HEK293 (cell line): ENCODE measurements at regions of chr5 and their contacts with region 1.

Region 1: DNA sequence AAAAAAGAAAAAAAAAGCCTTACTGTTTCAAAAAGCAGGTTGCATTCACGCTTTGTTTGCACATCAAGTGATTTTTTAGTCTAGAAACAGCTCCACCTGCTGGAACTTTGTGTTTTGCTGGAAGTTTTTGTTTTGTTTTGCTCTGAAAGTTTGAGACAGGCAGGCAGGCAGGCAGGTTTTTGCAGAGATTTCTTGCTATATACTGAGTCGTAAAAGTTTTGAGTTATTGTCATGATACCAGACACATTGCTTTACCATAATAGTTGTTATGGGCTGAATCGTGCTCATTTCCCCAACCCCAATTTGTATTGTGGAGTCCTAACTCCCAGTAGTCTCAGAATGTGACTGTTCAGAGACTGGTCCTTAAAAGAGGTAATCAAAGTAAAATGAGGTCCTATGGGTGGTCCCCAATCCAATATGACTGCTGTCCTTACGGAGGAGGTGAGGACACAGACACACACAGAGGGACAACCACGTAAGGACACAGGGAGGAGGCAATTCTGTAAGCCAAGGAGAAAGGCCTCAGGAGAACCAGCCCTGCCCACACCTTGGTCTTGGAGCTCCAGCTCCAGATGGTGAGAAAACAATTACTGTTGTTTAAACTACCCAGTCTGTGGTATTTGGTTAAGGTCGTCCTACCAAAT is 20.9 kb downstream of the OR2Y1 start:
- H3K4me3 ChIP-seq: no peak overlapping the region
- H3K27ac ChIP-seq: no peak overlapping the region
- H3K4me1 ChIP-seq: no peaks in the 10 kb centered on the region
- CTCF ChIP-seq: no peak

Region 2: GRCh38 chr5:180696116-180696515 is 22.8 kb before region 1 on chr5:
- CTCF ChIA-PET with region 1: interaction called, 15 read pairs
- POLR2A ChIA-PET with region 1: no interaction called
- H3K4me3 ChIP-seq: no peak overlapping the region
- H3K27ac ChIP-seq: no peak overlapping the region
- H3K4me1 ChIP-seq: no peaks in the 10 kb centered on the region
- CTCF ChIP-seq: no peak